BJ (cell line): ENCODE measurements at regions of chr4 and their contacts with region 1.

Region 1: GRCh38 chr4:168585168-168586091 is 88.6 kb downstream of the PALLD start:
- DNase-seq: no peak
- H3K4me3 ChIP-seq: no peak overlapping the region
- H3K27me3 ChIP-seq: no peaks in the 10 kb centered on the region
- CTCF ChIP-seq: peak; percentile 81

Region 2: GRCh38 chr4:168374772-168375523 is 210.5 kb before region 1 on chr4:
- CTCF ChIA-PET with region 1: no interaction called
- POLR2A ChIA-PET with region 1: no interaction called
- DNase-seq: no peak
- H3K4me3 ChIP-seq: no peak overlapping the region
- H3K27me3 ChIP-seq: no peaks in the 10 kb centered on the region
- CTCF ChIP-seq: no peak

Region 3: GRCh38 chr4:168398589-168398988 is 186.8 kb before region 1 on chr4:
- CTCF ChIA-PET with region 1: no interaction called
- POLR2A ChIA-PET with region 1: no interaction called
- DNase-seq: no peak
- H3K4me3 ChIP-seq: no peak overlapping the region
- H3K27me3 ChIP-seq: no peaks in the 10 kb centered on the region
- CTCF ChIP-seq: no peak

Region 4: GRCh38 chr4:168574581-168575295 is 10.7 kb before region 1 on chr4:
- CTCF ChIA-PET with region 1: interaction called, 14 read pairs
- POLR2A ChIA-PET with region 1: no interaction called
- DNase-seq: no peak
- H3K4me3 ChIP-seq: no peak overlapping the region
- H3K27me3 ChIP-seq: no peaks in the 10 kb centered on the region
- CTCF ChIP-seq: no peak

Region 5: GRCh38 chr4:168631241-168632162 is 46.1 kb after region 1 on chr4:
- CTCF ChIA-PET with region 1: interaction called, 14 read pairs
- POLR2A ChIA-PET with region 1: no interaction called
- DNase-seq: no peak
- H3K4me3 ChIP-seq: peak overlapping the region; percentile 35
- H3K27me3 ChIP-seq: peaks cover 11% of the 10 kb centered on the region
- CTCF ChIP-seq: peak; percentile 38

Region 6: GRCh38 chr4:168710353-168710946 is 125.0 kb after region 1 on chr4:
- CTCF ChIA-PET with region 1: interaction called, 13 read pairs
- POLR2A ChIA-PET with region 1: no interaction called
- DNase-seq: no peak
- H3K4me3 ChIP-seq: no peak overlapping the region
- H3K27me3 ChIP-seq: no peaks in the 10 kb centered on the region
- CTCF ChIP-seq: peak; percentile 69

Region 7: GRCh38 chr4:168923526-168924194 is 338.2 kb after region 1 on chr4:
- CTCF ChIA-PET with region 1: interaction called, 21 read pairs
- POLR2A ChIA-PET with region 1: no interaction called
- DNase-seq: peak; percentile 33
- H3K4me3 ChIP-seq: no peak overlapping the region
- H3K27me3 ChIP-seq: no peaks in the 10 kb centered on the region
- CTCF ChIP-seq: peak; percentile 75